ENCODE measurements at regions of chr11 and their contacts with region 1.

Region 1: DNA sequence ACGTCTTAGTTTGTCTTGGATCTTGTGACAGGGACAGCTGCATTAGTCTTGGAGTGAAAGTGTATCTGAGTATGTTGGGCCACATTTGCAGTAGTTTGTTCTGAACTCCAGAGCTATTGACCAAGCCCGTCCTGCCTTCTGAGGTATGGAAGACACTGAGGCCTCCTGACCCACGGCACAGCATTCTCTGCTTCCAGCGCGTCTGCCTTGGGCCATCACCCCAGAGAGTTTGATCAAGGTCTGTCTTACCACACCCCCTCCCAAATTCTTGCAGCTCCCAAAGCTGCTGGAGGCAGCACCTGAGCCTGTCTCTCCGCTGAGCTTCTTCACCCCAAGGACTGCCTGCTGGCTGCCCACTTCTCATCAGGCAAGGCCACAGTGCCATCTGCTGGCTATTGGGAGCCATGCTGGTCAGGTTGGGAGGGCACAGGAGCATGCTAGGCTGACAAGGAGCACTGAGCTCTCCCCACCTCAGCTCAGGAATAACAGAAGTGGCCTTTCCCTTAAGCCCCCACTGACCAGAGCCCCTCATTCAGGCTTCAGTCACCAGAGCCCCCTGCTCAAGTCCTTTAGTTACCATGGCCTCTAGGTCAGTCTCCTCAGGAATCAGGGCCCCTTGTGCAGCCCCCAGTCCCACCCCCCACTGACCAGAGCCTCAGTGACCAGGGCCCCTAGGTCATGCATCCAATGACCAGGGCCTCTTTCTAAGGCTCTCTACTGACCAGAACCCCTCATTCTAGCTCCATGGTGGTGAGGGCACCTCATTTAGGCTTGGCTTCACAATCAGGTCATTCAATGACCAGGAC is 27.2 kb upstream of the SMPD1 start:
- DNase-seq: peak; percentile 85
- H3K4me3 Mint-ChIP-seq: no peak overlapping the region
- H3K27ac Mint-ChIP-seq: no peak overlapping the region
- H3K4me1 Mint-ChIP-seq: peaks cover 3% of the 10 kb centered on the region
- H3K27me3 Mint-ChIP-seq: no peaks in the 10 kb centered on the region

Region 2: DNA sequence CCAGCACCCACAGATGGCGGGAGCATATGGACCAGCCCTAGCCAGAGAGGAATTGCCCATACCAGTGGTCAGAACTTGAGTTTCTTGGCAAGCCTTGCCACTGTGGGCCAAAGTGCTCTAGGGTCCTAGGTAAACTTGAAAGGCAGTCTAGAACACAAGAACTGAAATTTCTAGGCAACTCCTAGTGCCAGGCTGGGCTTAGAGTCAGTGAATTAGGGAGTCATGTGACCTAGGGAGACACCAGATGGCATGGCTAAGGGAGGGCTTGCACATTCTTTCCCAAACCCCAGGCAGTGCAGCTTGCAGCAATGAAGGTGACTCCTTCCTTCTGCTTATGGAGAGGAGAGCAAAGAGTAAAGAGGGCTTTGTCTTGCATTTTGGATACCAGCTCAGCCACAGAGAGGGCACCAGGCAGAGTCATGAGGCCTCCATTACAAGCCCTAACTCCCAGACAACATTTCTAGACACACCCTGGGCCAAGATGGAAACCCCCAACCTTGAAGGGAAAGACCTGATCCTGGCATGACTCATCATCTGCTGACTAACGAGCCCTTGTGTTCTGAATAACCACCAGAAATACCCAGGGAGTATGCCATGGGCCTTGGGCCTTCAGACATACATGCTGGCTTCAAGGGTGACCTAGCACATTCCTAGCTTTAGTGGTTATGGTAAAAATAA is 440.2 kb before region 1 on chr11:
- CTCF ChIA-PET with region 1: no interaction called
- POLR2A ChIA-PET with region 1: no interaction called
- intact Hi-C with region 1: no loop called
- DNase-seq: peak; percentile 52
- H3K4me3 Mint-ChIP-seq: no peak overlapping the region
- H3K27ac Mint-ChIP-seq: no peak overlapping the region
- H3K4me1 Mint-ChIP-seq: no peaks in the 10 kb centered on the region
- H3K27me3 Mint-ChIP-seq: no peaks in the 10 kb centered on the region

Region 3: GRCh38 chr11:6022956-6023355 is 340.1 kb before region 1 on chr11:
- CTCF ChIA-PET with region 1: interaction called, 28 read pairs
- POLR2A ChIA-PET with region 1: no interaction called
- intact Hi-C with region 1: no loop called
- DNase-seq: no peak
- H3K4me3 Mint-ChIP-seq: no peak overlapping the region
- H3K27ac Mint-ChIP-seq: no peak overlapping the region
- H3K4me1 Mint-ChIP-seq: no peaks in the 10 kb centered on the region
- H3K27me3 Mint-ChIP-seq: peaks cover 26% of the 10 kb centered on the region

Region 4: DNA sequence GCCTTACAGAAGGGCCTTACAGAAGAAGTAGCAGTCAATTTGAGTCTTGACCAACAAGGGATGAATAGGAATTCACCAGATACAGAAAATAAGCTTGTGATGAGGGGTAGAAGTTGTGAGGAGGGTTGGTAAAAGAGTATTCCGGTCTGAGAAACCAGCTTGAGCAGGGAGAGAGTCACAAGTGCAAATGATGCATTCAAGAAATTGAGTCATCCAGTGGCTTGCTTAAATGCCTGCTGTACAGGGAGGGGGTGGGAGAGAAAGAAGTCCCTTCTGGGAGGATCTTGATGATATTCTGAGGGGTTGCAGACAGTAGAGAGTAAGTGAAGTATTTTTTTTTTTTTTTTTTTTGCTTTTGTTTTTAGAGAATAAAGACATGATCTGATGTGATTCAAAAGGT is 94.3 kb before region 1 on chr11:
- CTCF ChIA-PET with region 1: interaction called, 12 read pairs
- POLR2A ChIA-PET with region 1: no interaction called
- intact Hi-C with region 1: no loop called
- DNase-seq: no peak
- H3K4me3 Mint-ChIP-seq: no peak overlapping the region
- H3K27ac Mint-ChIP-seq: no peak overlapping the region
- H3K4me1 Mint-ChIP-seq: no peaks in the 10 kb centered on the region
- H3K27me3 Mint-ChIP-seq: peaks cover 24% of the 10 kb centered on the region

Region 5: DNA sequence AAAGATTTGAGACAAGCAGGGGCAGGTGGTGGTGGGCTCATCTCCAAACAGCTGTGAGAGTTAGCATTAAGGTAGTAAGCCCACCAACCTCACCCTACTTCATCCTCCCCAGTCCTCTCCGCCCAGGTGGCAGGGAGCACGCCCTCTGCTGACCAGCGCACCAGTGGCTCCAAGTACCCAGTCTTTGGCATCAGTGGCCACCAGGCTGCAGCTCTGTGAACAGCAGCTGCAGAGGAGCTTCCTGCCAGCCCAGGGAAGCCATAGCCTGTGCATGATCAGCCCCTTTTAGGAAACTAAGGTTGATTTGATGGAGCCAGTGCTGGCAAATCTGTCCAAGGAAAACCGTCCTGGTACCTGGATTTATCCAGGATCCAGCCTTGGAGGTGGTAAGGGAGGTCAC is 64.5 kb before region 1 on chr11:
- CTCF ChIA-PET with region 1: interaction called, 37 read pairs
- POLR2A ChIA-PET with region 1: no interaction called
- intact Hi-C with region 1: no loop called
- DNase-seq: peak; percentile 55
- H3K4me3 Mint-ChIP-seq: no peak overlapping the region
- H3K27ac Mint-ChIP-seq: no peak overlapping the region
- H3K4me1 Mint-ChIP-seq: no peaks in the 10 kb centered on the region
- H3K27me3 Mint-ChIP-seq: peaks cover 5% of the 10 kb centered on the region

Region 6: DNA sequence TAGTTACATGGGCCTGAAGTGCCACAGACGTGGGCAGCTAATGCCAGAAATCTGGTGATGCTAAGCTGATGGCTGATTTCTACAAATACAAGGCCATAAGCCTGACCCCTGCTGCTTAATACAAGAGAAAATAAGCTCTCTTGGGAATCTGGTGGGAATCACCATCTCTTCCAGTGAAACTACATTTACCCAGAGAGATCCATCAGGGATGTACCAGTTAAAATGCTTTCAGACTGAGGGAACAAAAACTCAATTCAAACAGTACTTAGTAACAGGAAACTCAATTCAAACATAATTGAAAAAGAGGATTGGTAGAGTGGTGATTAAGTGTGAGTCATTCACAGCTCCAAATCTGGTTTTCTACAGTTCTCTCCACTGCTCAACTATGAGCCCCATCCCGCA is 41.1 kb before region 1 on chr11:
- CTCF ChIA-PET with region 1: interaction called, 23 read pairs
- POLR2A ChIA-PET with region 1: no interaction called
- intact Hi-C with region 1: no loop called
- DNase-seq: peak; percentile 41
- H3K4me3 Mint-ChIP-seq: peak overlapping the region; percentile 39
- H3K27ac Mint-ChIP-seq: peak overlapping the region; percentile 97
- H3K4me1 Mint-ChIP-seq: peaks cover 40% of the 10 kb centered on the region
- H3K27me3 Mint-ChIP-seq: peaks cover 32% of the 10 kb centered on the region

Region 7: DNA sequence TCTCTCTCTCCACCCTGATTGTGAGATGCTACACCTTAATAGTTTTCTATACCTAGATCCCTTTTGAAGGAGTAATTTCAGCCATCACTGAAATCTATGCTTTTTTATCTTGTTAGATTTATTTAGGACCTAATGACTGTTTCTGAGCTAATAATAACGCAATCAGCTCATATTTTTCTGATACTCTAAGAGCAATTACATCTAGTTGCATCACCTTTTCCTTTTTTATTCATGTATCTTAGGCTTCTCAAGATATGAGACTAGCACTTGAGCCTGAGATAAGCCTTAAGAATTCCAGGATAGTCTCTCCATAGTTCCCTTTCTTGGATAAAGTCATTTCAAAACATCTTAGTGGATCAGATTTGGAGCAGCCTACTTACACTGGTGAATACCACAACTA is 17.7 kb before region 1 on chr11:
- CTCF ChIA-PET with region 1: interaction called, 76 read pairs
- POLR2A ChIA-PET with region 1: no interaction called
- intact Hi-C with region 1: no loop called
- DNase-seq: no peak
- H3K4me3 Mint-ChIP-seq: no peak overlapping the region
- H3K27ac Mint-ChIP-seq: no peak overlapping the region
- H3K4me1 Mint-ChIP-seq: no peaks in the 10 kb centered on the region
- H3K27me3 Mint-ChIP-seq: peaks cover 1% of the 10 kb centered on the region

Region 8: DNA sequence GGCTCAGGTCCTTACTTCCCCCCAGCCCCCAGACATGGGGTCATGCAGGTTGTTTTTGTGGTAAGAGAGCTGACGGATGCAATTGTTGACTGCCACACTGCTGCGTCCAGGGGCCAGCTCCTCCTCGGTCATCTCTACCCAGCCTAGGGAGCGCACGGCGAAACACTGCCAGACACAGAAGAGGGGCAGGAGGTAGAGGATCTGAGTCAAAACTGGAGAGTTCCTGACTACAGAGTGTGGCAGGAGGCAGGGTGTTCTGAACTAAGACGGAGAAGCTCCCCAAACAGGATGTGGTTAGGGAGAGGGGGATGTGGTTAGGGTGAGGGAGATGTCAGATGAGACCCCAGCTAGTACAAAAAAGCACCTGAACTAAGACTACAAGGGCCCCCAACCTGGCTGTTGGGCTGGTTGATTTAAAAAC is 39.5 kb after region 1 on chr11:
- CTCF ChIA-PET with region 1: interaction called, 10 read pairs
- POLR2A ChIA-PET with region 1: no interaction called
- intact Hi-C with region 1: no loop called
- DNase-seq: peak; percentile 88
- H3K4me3 Mint-ChIP-seq: peak overlapping the region; percentile 55
- H3K27ac Mint-ChIP-seq: peak overlapping the region; percentile 90
- H3K4me1 Mint-ChIP-seq: peaks cover 71% of the 10 kb centered on the region
- H3K27me3 Mint-ChIP-seq: no peaks in the 10 kb centered on the region

Measured in activated CD4-positive, alpha-beta memory T cell treated with anti-CD3 and anti-CD28 coated beads for 36 hours (primary cell).